ENCODE measurements at regions of chr12 and their contacts with region 1.

Region 1: DNA sequence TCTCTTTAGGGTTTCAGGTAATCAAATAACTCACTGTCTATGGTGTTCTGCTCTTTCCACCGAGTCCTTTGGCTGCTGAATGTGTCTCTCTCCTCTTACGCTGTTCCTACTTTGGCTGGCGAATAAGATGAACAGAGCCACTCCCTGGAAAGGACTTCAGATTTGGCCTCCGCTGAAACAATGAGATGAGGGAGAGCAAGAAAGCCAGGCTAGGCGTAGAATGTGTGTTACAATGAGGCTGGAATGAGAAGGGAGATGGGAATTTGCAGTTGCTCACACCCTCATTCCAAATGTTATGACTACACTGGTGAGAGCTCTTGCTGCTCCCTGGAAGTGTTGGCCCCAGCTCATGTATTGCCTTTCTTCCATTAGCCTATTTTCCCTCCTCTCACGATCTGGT is at the start of gene MFAP5:
- DNase-seq: no peak
- ATAC-seq: peak; percentile 73
- H3K4me3 ChIP-seq: no peak within 1 kb of the TSS
- H3K27ac ChIP-seq: no peak within 1 kb of the TSS
- H3K4me1 ChIP-seq: no peaks in the 10 kb centered on the region
- H3K27me3 ChIP-seq: no peaks in the 10 kb centered on the region
- total RNA-seq, gene MFAP5: 59.7 to 470 TPM

Region 2: GRCh38 chr12:8742501-8742900 is 79.9 kb after region 1 on chr12:
- intact Hi-C with region 1: no loop called
- DNase-seq: peak in 1 of 2 donors; percentile 69
- ATAC-seq: no peak
- H3K4me3 ChIP-seq: no peak overlapping the region
- H3K27ac ChIP-seq: peak overlapping the region; percentile 7 to 69
- H3K4me1 ChIP-seq: peaks cover 2 to 12% of the 10 kb centered on the region in 2 donors
- H3K27me3 ChIP-seq: no peaks in the 10 kb centered on the region

Region 3: DNA sequence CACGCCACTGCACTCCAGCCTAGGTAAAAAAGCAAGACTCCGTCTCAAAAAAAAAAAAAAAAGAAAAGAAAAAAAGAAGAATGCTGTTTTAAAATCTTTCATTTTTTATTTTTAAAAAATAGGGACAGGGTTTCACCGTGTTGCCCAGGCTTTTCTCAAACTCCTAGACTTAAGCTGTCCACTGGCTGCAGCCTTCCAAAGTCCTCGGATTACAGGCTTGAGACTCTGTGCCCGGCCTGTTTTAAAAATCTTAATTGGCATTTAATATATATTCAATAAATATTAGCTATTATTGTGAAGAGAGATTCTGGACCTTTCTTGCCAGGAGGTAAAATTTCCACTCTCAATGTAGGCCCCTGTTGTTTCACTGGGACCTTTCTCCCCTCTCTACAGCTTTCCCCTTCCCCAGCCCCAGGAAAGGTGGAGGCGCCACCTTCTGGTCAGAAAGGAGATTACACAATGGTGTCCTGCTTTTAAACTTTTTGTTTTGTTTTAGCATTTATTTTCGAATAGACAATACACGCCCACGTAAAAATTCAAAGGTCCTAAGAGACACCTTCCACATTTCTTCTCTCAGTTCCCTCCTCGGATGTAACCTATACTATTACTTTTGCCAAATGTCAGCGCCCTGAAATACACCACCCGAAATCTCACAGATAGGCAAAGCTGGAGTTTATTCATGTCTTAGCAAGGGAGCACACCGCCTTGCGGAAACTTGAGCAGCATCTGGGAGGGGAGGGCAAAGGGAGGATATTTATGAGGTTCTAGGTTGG is 227.9 kb after region 1 on chr12:
- intact Hi-C with region 1: loop called (anchors 5 kb)
- DNase-seq: no peak
- ATAC-seq: peak; percentile 86
- H3K4me3 ChIP-seq: peak overlapping the region; percentile 37 to 55
- H3K27ac ChIP-seq: no peak overlapping the region
- H3K4me1 ChIP-seq: no peaks in the 10 kb centered on the region
- H3K27me3 ChIP-seq: no peaks in the 10 kb centered on the region

Region 4: DNA sequence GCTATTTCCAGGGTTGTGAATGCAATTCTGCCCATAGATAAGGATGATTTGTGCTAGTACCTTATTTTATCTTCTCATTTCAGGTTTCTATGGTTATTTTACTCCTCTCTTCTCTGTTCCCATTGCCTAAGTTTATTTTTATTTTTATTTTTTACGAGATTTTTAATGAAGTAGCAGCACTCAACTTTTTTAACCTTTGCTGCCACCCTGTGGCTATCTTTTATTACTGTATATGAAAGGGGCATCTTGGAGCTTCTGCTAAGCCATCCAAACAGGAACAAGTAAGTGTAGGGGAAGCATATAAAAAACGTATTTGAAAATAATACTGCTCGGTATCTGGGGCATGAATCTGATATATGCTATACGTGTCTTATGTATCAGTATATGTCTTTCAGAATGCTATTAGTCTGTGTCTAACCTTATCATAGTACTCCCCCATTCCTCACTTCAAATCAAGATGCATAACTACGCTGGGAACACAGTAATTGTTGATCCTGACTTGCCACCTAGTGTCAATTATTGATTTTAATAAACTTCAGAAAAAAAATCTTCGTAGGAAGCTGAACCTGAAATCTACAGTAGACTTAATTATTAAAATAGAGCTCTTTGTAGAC is 387.0 kb after region 1 on chr12:
- intact Hi-C with region 1: loop called (anchors 10 kb)
- DNase-seq: no peak
- ATAC-seq: peak; percentile 57
- H3K4me3 ChIP-seq: no peak overlapping the region
- H3K27ac ChIP-seq: no peak overlapping the region
- H3K4me1 ChIP-seq: no peaks in the 10 kb centered on the region
- H3K27me3 ChIP-seq: no peaks in the 10 kb centered on the region

Region 5: DNA sequence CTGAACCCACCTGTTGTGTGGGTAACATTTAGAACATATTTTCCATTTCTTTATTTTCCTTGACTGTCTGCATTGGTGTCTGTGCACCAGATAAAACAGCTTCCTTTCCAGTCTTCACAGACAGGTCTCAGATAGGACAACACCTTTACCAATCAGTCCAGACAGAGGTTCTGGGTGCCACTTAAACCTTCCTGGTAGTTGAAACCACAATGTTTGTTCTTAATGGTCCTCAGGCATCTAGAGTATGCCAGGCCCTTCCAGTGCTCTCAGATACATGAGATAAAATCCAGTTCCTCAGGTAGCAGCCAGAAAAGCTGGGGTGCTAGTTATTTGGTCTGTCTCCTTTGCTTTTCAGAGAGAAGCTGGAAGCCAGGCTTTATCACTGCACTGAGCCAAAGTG is 999.9 kb after region 1 on chr12:
- intact Hi-C with region 1: loop called in 1 of 2 experiments (anchors 5 kb)
- DNase-seq: no peak
- ATAC-seq: no peak
- H3K4me3 ChIP-seq: no peak overlapping the region
- H3K27ac ChIP-seq: no peak overlapping the region
- H3K4me1 ChIP-seq: no peaks in the 10 kb centered on the region
- H3K27me3 ChIP-seq: no peaks in the 10 kb centered on the region